Transverse colon (tissue), 4 donors: ENCODE measurements at regions of chr6 and their contacts with region 1.

Region 1: GRCh38 chr6:27295301-27296081 is 16.6 kb downstream of the POM121L2 start:
- DNase-seq: no peak
- H3K4me3 ChIP-seq: no peak overlapping the region
- H3K27ac ChIP-seq: no peak overlapping the region
- H3K4me1 ChIP-seq: peaks cover 0 to 12% (median 4%) of the 10 kb centered on the region in 4 donors
- H3K27me3 ChIP-seq: peaks cover 100% of the 10 kb centered on the region
- CTCF ChIP-seq: no peak
- EP300 ChIP-seq: no peak
- POLR2A ChIP-seq: no peak

Region 2: GRCh38 chr6:26170951-26171841 is 1124.3 kb before region 1 on chr6:
- in situ Hi-C with region 1: no loop called
- intact Hi-C with region 1: no loop called
- DNase-seq: no peak
- H3K4me3 ChIP-seq: peak overlapping the region; percentile 58 to 73 (median 66)
- H3K27ac ChIP-seq: peak overlapping the region; percentile 95 to 99 (median 98)
- H3K4me1 ChIP-seq: peaks cover 4 to 27% (median 9%) of the 10 kb centered on the region in 4 donors
- H3K27me3 ChIP-seq: no peaks in the 10 kb centered on the region
- CTCF ChIP-seq: no peak
- EP300 ChIP-seq: no peak
- POLR2A ChIP-seq: no peak

Region 3: DNA sequence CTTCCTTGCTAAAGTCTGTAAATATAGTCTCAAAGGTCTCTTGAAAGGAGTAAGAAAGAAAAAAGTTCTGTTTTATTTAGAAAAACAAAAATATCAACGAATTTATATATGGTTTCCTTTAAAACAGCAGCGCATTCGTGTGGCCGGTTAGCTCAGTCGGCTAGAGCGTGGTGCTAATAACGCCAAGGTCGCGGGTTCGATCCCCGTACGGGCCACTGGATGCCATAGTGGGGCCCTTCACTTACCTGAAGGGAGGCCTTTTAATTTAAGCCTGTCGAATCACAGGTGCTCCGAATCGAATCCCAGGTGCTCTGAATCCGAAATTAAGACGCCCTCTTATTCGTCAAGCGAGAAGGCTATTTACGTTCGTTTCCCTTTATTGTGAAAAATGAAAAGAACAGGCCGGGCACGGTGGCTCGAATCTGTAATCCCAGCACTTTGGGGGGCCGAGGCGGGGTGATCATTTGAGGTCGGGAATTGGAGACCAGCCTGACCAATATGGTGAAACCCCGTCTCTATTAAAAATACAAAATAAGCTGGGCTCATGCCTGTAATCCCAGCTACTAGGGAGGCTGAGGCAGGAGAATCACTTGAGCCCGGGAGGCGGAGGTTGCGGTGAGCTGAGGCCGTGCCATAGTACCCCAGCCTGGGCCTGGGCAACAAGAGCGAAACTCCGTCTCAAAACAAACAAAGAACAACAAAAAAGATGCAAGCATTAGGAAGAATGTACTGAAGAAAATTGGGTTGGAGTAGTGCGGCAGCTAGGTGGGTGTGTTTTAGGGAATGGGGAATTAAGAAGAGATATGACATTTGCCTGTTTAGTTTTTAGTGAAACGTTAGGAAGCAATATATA is 373.2 kb after region 1 on chr6:
- in situ Hi-C with region 1: loop called in 1 of 4 experiments (anchors 10 kb)
- intact Hi-C with region 1: no loop called
- DNase-seq: peak; percentile 23
- H3K4me3 ChIP-seq: peak overlapping the region in 1 of 4 donors; percentile 12
- H3K27ac ChIP-seq: no peak overlapping the region
- H3K4me1 ChIP-seq: peaks cover 0 to 12% (median 7%) of the 10 kb centered on the region in 4 donors
- H3K27me3 ChIP-seq: peaks cover 91% of the 10 kb centered on the region
- CTCF ChIP-seq: no peak
- EP300 ChIP-seq: no peak
- POLR2A ChIP-seq: no peak